Activated CD8-positive, alpha-beta T cell treated with anti-CD3 and anti-CD28 coated beads for 36 hours (primary cell): ENCODE measurements at regions of chr19 and their contacts with region 1.

Region 1: DNA sequence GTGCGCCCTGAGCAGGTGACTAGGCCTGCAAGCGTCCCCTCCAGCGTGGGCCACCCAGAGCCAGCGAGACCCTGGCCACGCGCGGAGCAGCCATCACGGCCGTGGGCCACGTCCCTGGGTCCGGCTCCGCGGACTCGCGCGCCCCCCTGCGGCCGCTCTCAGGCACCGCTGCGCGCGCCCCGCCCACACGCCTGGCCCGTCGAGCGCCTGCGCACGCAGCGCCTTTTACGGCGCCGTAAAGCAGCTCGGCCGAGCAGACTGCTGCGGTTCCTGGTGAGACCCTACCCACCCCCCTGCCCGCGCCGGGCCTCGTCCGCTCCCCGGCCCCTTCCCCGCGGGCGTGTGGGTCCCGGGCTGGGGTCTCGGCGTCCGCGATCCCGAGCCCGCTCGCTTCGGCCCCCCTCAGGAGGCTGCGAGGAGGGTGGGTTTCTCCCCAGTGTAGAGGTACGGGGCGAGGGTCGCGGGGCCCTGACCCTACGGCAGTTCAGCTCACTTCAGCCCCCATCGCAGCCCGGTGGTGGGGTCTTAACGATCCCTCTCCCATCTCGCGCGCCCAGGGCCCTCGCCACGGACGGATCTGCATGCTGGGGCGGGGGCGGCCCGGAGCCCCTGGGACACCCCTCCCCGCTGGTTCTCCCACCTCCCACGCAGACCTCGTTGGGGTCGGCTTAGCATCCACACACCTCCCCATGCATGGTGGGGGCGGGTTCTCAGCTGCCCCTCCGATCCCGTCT is at the start of gene TRAPPC5:
- DNase-seq: peak; percentile 88
- ATAC-seq: peak; percentile 38
- H3K4me3 Mint-ChIP-seq: peak within 1 kb of the TSS; percentile 92
- H3K27ac Mint-ChIP-seq: peak within 1 kb of the TSS; percentile 95
- H3K4me1 Mint-ChIP-seq: peaks cover 52% of the 10 kb centered on the region
- H3K27me3 Mint-ChIP-seq: peaks cover 27% of the 10 kb centered on the region
- CTCF ChIP-seq: peak; percentile 99
- total RNA-seq, gene TRAPPC5: 85.0 to 85.9 TPM

Region 2: DNA sequence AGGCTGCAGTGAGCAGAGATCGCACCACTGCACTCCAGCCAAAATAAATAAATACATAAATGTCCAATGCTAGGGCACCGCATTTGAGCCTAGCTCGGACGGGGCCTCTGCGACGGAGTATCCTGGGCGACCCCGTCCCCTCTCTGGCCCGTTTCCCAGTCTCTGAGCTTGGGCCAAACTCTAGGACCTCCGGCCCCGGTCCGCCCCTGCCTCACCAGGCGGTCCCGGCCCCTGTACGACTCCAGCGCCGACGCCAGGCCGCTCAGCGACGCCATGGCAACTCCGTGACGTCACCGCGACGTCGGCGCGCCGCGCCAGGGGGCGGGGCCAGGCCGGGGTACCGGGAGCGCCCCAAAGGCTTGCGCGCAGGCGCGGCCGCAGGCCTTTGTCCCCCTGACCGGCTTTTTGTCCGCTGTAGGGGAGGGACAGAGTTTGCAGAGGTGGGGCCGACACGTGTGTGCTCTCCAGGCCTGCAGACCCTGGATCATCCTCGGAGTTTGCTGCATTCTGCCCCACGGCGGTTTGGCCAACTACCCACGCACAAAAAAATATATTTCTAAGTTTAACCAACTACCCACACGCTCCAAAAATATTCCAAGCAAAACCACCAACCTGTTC is 191.9 kb before region 1 on chr19 and contains the start of gene PEX11G:
- CTCF ChIA-PET with region 1: no interaction called
- POLR2A ChIA-PET with region 1: no interaction called
- intact Hi-C with region 1: no loop called
- DNase-seq: peak; percentile 89
- ATAC-seq: peak; percentile 92
- H3K4me3 Mint-ChIP-seq: peak within 1 kb of the TSS; percentile 79
- H3K27ac Mint-ChIP-seq: peak within 1 kb of the TSS; percentile 77
- H3K4me1 Mint-ChIP-seq: peaks cover 22% of the 10 kb centered on the region
- H3K27me3 Mint-ChIP-seq: no peaks in the 10 kb centered on the region
- CTCF ChIP-seq: no peak
- total RNA-seq, gene PEX11G: 1.4 to 1.5 TPM

Region 3: GRCh38 chr19:7596232-7596937 is 84.4 kb before region 1 on chr19:
- CTCF ChIA-PET with region 1: interaction called, 10 read pairs
- POLR2A ChIA-PET with region 1: no interaction called
- intact Hi-C with region 1: no loop called
- DNase-seq: peak; percentile 22
- ATAC-seq: no peak
- H3K4me3 Mint-ChIP-seq: peak overlapping the region; percentile 56
- H3K27ac Mint-ChIP-seq: no peak overlapping the region
- H3K4me1 Mint-ChIP-seq: peaks cover 7% of the 10 kb centered on the region
- H3K27me3 Mint-ChIP-seq: peaks cover 30% of the 10 kb centered on the region
- CTCF ChIP-seq: peak; percentile 15

Region 4: DNA sequence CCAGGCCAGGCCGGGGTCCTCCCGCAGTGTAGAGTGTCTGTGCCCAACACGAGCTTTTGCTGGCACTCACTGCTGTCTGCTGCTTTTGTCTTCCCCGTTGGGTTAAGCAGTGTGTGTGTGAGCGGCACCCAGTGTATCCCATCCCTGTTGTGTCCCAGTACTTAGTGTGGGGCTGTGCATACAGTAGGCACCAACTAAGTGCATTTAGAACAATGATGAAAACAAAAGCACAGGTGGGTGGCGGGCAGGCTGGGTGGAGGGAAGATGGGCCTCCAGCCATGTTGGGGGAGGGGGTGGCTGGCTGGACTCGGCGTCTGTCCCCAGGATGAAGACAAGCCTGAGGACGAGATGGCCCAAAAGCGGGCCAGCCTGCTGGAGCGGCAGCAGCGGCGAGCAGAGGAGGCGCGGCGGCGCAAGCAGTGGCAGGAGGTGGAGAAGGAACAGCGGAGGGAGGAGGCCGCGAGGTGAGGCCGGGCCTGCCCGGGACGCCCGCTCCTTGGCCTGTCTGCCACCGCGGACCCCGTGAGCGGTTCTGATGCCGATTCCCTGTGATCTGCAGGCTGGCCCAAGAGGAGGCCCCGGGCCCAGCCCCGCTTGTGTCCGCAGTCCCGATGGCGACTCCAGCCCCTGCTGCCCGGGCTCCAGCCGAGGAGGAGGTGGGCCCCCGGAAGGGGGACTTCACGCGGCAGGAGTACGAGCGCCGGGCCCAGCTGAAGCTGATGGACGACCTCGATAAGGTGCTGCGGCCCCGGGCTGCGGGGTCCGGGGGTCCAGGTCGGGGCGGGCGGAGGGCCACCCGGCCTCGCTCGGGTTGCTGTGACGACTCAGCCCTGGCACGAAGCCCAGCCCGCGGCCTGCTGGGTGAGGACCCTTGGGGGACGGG is 65.7 kb before region 1 on chr19:
- CTCF ChIA-PET with region 1: no interaction called
- POLR2A ChIA-PET with region 1: no interaction called
- intact Hi-C with region 1: no loop called
- DNase-seq: no peak
- ATAC-seq: no peak
- H3K4me3 Mint-ChIP-seq: no peak overlapping the region
- H3K27ac Mint-ChIP-seq: no peak overlapping the region
- H3K4me1 Mint-ChIP-seq: no peaks in the 10 kb centered on the region
- H3K27me3 Mint-ChIP-seq: no peaks in the 10 kb centered on the region
- CTCF ChIP-seq: no peak

Region 5: GRCh38 chr19:7636691-7637373 is 43.9 kb before region 1 on chr19 and contains the start of gene STXBP2:
- CTCF ChIA-PET with region 1: interaction called, 14 read pairs
- POLR2A ChIA-PET with region 1: interaction called, 5 read pairs
- intact Hi-C with region 1: no loop called
- DNase-seq: peak; percentile 92
- ATAC-seq: peak; percentile 98
- H3K4me3 Mint-ChIP-seq: peak within 1 kb of the TSS; percentile 81
- H3K27ac Mint-ChIP-seq: peak within 1 kb of the TSS; percentile 88
- H3K4me1 Mint-ChIP-seq: peaks cover 27% of the 10 kb centered on the region
- H3K27me3 Mint-ChIP-seq: no peaks in the 10 kb centered on the region
- CTCF ChIP-seq: peak; percentile 36
- total RNA-seq, gene STXBP2: 96.4 to 99.2 TPM

Region 6: DNA sequence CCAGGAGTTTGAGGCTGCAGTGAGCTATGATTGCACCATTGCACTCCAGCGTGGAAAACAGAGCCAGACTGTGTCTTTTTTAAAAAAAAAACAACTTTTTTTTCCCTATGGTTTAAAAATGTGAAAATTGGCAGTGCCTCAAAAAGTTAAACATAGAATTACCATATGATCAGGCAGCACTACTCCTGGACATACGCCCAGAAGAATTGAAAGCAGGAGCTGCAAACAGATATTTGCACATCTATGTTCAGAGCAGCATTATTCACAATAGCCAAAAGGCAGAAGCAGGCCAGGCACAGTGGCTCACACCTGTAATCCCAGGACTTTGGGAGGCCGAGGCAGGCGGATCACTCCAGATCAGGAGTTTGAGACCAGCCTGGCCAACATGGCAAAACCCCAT is 15.7 kb before region 1 on chr19:
- CTCF ChIA-PET with region 1: interaction called, 28 read pairs
- POLR2A ChIA-PET with region 1: interaction called, 3 read pairs
- intact Hi-C with region 1: no loop called
- DNase-seq: no peak
- ATAC-seq: no peak
- H3K4me3 Mint-ChIP-seq: no peak overlapping the region
- H3K27ac Mint-ChIP-seq: no peak overlapping the region
- H3K4me1 Mint-ChIP-seq: peaks cover 8% of the 10 kb centered on the region
- H3K27me3 Mint-ChIP-seq: peaks cover 13% of the 10 kb centered on the region
- CTCF ChIP-seq: no peak

Region 7: GRCh38 chr19:7705387-7706187 is 24.8 kb after region 1 on chr19:
- CTCF ChIA-PET with region 1: interaction called, 15 read pairs
- POLR2A ChIA-PET with region 1: no interaction called
- intact Hi-C with region 1: no loop called
- DNase-seq: peak; percentile 94
- ATAC-seq: peak; percentile 93
- H3K4me3 Mint-ChIP-seq: peak overlapping the region; percentile 57
- H3K27ac Mint-ChIP-seq: peak overlapping the region; percentile 87
- H3K4me1 Mint-ChIP-seq: peaks cover 39% of the 10 kb centered on the region
- H3K27me3 Mint-ChIP-seq: no peaks in the 10 kb centered on the region
- CTCF ChIP-seq: no peak

Region 8: DNA sequence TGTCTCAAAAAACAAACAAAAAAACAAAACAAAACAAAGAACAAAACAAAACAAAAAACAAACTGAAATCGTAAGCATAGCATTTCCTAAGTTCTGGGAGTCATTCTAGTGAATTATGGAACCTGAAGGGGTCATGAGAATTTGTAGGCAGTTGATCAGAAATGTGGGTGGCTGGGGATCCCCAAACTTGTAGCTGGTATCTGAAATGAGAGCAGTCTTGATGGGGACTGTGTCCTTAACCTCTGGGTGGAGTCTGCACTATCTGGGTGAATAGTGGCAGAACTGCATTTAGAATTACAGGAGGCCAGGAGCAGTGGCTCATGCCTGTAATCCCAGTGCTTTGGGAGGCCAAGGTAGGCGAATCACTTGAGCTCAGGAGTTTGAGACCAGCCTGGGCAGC is 45.0 kb after region 1 on chr19:
- CTCF ChIA-PET with region 1: no interaction called
- POLR2A ChIA-PET with region 1: no interaction called
- intact Hi-C with region 1: no loop called
- DNase-seq: no peak
- ATAC-seq: no peak
- H3K4me3 Mint-ChIP-seq: no peak overlapping the region
- H3K27ac Mint-ChIP-seq: no peak overlapping the region
- H3K4me1 Mint-ChIP-seq: peaks cover 8% of the 10 kb centered on the region
- H3K27me3 Mint-ChIP-seq: peaks cover 33% of the 10 kb centered on the region
- CTCF ChIP-seq: no peak

Region 9: GRCh38 chr19:7792253-7792652 is 111.5 kb after region 1 on chr19:
- CTCF ChIA-PET with region 1: interaction called, 14 read pairs
- POLR2A ChIA-PET with region 1: no interaction called
- intact Hi-C with region 1: loop called (anchors 5 kb)
- DNase-seq: no peak
- ATAC-seq: no peak
- H3K4me3 Mint-ChIP-seq: no peak overlapping the region
- H3K27ac Mint-ChIP-seq: no peak overlapping the region
- H3K4me1 Mint-ChIP-seq: peaks cover 6% of the 10 kb centered on the region
- H3K27me3 Mint-ChIP-seq: peaks cover 27% of the 10 kb centered on the region
- CTCF ChIP-seq: no peak